ENCODE measurements at regions of chr7 and their contacts with region 1.

Region 1: GRCh38 chr7:94657771-94658693 is 2.1 kb upstream of the SGCE start:
- DNase-seq: peak; percentile 82 to 86
- H3K4me3 ChIP-seq: no peak overlapping the region
- H3K27ac ChIP-seq: no peak overlapping the region
- H3K4me1 ChIP-seq: peaks cover 17% of the 10 kb centered on the region
- H3K27me3 ChIP-seq: no peaks in the 10 kb centered on the region
- CTCF ChIP-seq: no peak

Region 2: DNA sequence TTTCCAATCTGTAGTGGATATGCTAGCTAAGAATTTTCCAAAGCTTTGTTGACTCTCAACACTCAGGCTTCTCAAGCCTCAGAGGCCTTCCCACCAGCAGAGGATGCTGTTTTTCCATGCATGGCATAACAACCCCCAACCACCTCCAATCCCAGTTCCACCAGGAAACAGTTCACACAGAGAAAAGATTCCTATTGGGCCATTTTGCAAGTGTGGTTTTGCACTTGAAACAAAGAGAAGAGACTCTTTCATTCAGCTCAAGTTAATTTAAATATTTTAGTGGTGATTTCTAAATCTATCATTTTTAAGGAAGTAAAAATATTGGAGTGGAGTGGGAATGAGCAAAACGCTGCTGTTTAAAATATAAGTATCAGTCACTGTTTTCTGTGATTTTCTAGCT is 369.0 kb before region 1 on chr7:
- CTCF ChIA-PET with region 1: interaction called, 3 read pairs
- POLR2A ChIA-PET with region 1: no interaction called
- intact Hi-C with region 1: loop called (anchors 5 kb)
- DNase-seq: peak; percentile 48 to 57
- H3K4me3 ChIP-seq: no peak overlapping the region
- H3K27ac ChIP-seq: no peak overlapping the region
- H3K4me1 ChIP-seq: no peaks in the 10 kb centered on the region
- H3K27me3 ChIP-seq: no peaks in the 10 kb centered on the region
- CTCF ChIP-seq: peak; percentile 82

Region 3: GRCh38 chr7:94580596-94580995 is 77.4 kb before region 1 on chr7:
- CTCF ChIA-PET with region 1: interaction called, 4 read pairs
- POLR2A ChIA-PET with region 1: no interaction called
- intact Hi-C with region 1: loop called (anchors 5 kb)
- DNase-seq: peak; percentile 46 to 98
- H3K4me3 ChIP-seq: no peak overlapping the region
- H3K27ac ChIP-seq: peak overlapping the region; percentile 88
- H3K4me1 ChIP-seq: peaks cover 60% of the 10 kb centered on the region
- H3K27me3 ChIP-seq: no peaks in the 10 kb centered on the region
- CTCF ChIP-seq: no peak

Region 4: DNA sequence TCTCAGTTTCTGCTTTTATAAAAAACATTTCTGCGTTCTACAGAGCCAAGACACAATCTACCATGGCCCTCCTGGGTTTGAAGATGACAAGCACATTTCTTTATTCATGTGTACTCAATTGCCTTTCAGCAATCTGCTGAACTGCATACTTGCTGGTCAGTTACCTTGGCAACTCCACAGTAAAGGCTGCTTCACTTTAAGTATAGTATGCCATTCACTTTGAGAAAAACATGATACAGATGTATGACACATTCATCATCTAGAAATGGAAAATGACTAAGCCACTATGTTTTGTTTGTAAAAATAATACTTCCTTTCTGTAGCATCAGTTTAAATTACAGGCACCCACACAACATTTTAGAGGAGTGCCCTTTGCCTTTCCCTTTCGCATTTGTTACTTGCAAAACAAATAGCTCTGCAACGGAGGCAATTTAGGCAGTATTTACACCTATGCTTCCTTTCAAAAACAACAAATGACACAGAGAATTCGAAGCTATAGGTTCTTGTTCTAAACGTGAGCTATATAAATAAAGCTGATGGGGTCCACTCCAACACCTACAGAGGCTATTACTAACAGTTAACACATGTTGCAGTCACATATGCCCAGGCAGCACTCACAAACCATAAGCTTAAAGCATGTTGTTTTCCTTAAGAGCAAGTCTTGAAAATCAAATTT is 25.6 kb before region 1 on chr7:
- CTCF ChIA-PET with region 1: no interaction called
- POLR2A ChIA-PET with region 1: no interaction called
- intact Hi-C with region 1: no loop called
- DNase-seq: peak; percentile 21 to 55
- H3K4me3 ChIP-seq: no peak overlapping the region
- H3K27ac ChIP-seq: no peak overlapping the region
- H3K4me1 ChIP-seq: peaks cover 5% of the 10 kb centered on the region; the same call in 1 of the 2 replicates
- H3K27me3 ChIP-seq: no peaks in the 10 kb centered on the region
- CTCF ChIP-seq: no peak

Region 5: DNA sequence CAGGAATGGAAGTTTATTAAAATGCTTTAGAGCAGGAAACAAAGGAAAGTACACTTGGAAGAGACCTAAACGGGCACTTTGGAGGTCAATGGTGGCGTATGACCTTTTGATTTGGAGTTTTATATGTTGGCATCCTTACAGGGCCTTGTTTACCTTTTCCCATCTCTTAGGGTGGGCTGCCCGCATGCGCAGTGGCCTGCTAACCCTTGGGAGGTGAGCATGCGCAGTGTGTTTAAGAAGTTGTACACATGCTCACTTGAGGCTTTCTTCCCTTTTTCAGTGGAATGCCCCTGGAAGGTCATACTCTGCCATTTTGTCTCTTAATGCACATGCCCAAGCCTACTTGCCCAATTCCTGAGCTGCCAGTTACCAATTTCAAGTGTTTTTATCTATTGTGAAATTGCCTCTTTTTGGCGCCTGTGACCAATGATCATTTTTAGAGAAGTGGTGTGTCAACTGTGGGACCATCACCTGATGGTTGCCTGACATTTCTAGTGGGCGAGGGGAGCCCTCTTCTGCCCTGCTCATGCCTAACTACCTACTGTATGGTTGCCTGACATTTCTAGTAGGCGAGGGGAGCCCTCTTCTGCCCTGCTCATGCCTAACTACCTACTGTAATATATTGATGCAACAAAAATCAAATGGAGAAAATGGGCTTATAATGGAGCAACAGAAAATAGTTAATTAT is 387.3 kb after region 1 on chr7:
- CTCF ChIA-PET with region 1: no interaction called
- POLR2A ChIA-PET with region 1: no interaction called
- intact Hi-C with region 1: loop called (anchors 10 kb)
- DNase-seq: peak in 1 of 2 experiments; percentile 25
- H3K4me3 ChIP-seq: no peak overlapping the region
- H3K27ac ChIP-seq: no peak overlapping the region
- H3K4me1 ChIP-seq: no peaks in the 10 kb centered on the region
- H3K27me3 ChIP-seq: no peaks in the 10 kb centered on the region
- CTCF ChIP-seq: no peak; the same call in 1 of the 2 replicates

Region 6: DNA sequence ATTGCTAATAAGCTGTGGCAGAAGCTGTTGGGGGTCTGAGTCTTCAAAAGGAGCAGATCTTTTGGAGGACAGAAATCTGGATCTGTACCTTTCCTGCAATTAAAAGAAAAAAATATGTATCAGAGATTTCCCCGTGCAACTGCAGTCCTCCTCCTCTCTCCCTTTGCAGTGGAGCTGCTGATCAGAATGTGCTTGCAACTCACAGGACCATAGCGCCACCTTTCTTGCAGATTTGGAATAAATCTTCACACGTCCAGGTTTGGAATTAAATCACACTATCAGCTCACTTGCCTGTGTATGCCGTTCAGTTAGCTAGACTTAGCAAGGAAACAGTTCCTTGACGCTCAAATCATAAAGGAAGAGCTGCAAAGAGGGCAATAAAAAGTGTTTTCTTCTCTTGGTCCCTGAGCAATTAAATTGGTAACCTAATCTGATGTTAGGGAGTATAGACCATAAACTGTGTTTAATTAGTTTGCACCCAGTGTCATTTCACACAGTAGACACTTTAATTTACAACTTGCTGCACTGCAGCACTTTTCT is 588.9 kb after region 1 on chr7:
- CTCF ChIA-PET with region 1: no interaction called
- POLR2A ChIA-PET with region 1: no interaction called
- intact Hi-C with region 1: loop called (anchors 10 kb)
- DNase-seq: peak; percentile 47 to 48
- H3K4me3 ChIP-seq: no peak overlapping the region
- H3K27ac ChIP-seq: no peak overlapping the region
- H3K4me1 ChIP-seq: no peaks in the 10 kb centered on the region
- H3K27me3 ChIP-seq: no peaks in the 10 kb centered on the region
- CTCF ChIP-seq: peak; percentile 83